ENCODE measurements at regions of chr3 and their contacts with region 1.

Region 1: DNA sequence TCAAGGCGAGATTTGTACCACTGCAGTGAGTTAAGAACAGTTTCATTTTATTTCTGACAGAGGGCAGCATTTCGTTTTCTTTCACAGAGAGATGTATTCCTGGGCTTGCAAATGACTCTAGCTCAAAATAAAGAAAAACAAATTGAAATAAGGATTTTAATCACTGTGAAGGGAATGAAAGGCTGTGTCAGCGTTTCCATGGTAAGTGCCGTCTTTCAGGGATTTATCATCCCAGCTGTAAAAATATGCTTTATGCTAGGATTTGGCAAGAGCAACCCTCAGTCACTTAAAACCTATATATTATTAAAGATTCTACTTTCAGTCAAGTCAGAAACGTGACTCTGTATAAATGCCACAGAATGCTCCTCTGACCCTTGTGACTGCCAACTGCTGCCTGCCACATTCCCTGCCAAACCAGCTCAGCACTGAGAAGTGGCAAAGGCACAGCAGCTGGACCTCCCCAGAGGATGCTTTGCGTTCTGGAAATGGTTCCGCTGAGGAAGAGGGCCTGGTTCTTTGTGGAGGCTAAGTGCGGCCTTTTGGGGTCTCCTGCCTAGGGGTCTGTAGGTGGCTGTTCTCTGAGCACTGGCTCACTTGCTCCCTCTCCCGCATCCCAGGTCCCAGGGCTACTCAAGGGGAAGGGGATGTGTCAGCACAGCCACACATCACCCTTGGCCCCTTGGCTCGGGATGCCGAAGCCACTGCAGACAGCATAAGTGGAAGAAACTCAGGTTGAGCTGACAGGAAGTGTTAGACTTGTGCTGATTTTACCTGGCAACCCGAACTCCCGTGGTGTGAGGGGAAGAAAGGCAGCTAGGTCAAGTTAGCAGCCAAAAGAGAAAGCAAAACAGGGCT is 56.6 kb upstream of the POMGNT2 start:
- DNase-seq: no peak
- H3K4me3 ChIP-seq: no peak overlapping the region
- H3K27ac ChIP-seq: no peak overlapping the region
- H3K4me1 ChIP-seq: no peaks in the 10 kb centered on the region
- H3K27me3 ChIP-seq: no peaks in the 10 kb centered on the region
- CTCF ChIP-seq: peak; percentile 52

Region 2: DNA sequence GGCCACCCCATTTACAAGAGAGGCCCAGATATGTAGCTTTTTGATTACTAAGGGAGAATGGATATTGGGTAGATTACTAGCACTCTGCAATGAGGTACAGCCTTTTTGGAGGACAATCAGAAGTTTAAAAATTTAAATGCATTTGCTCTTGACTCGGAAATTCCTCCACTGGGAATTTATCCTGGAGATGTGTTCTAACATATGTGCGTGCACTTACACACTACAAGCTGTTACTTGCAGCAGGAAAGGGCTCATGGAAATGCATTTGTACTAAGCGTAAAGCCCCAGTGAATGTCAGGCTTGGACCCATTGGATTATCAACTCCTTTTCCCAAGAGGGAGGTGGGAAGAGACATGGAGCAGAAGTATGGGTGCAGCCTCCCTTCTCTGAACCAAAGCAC is 48.8 kb before region 1 on chr3:
- CTCF ChIA-PET with region 1: interaction called, 10 read pairs
- POLR2A ChIA-PET with region 1: no interaction called
- intact Hi-C with region 1: no loop called
- DNase-seq: no peak
- H3K4me3 ChIP-seq: no peak overlapping the region
- H3K27ac ChIP-seq: no peak overlapping the region
- H3K4me1 ChIP-seq: no peaks in the 10 kb centered on the region
- H3K27me3 ChIP-seq: peaks cover 7% of the 10 kb centered on the region; the same call in 1 of the 2 replicates
- CTCF ChIP-seq: no peak

Region 3: GRCh38 chr3:43194490-43195114 is 32.1 kb after region 1 on chr3:
- CTCF ChIA-PET with region 1: no interaction called
- POLR2A ChIA-PET with region 1: no interaction called
- intact Hi-C with region 1: no loop called
- DNase-seq: no peak
- H3K4me3 ChIP-seq: no peak overlapping the region
- H3K27ac ChIP-seq: no peak overlapping the region
- H3K4me1 ChIP-seq: no peaks in the 10 kb centered on the region
- H3K27me3 ChIP-seq: no peaks in the 10 kb centered on the region
- CTCF ChIP-seq: no peak

Region 4: DNA sequence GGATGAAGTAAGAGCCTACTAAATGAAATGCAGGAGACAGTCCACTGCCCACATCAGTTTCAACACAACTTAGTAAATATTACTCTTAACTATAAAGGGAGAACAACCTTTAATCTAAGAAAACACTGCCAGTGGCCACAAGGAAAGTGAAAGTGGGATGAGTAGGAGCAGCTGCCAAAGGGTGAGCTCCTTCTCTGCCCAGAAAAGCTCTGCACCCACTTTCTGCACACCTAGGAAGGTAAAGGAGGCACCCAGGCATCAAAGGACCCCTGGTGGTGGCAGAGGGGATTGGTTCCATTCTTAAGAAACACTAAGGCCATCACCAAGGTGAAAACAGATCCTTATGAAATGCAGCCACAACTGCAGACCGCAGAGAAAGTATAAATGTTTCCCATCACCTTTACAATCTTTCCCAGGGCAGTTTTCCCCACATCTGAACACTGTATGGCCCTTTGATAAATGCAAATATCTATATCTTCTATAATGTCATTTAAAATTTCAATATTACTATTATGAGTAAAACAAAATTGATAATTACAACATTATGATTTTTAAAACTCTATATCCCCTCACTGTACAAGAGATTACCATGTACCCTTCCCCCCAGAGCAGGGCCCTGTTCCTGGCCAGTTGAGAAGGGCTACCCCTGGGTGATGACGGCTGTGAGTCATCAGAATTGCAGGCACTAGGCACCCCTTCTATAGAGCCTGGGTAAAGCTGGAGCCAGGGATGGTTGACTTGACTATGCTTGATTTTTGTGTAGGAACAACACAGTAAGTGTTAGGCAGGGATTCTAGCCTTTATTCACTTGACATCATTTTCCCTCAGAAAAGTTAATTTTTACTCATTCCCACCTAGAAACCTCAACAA is 215.8 kb after region 1 on chr3:
- CTCF ChIA-PET with region 1: no interaction called
- POLR2A ChIA-PET with region 1: no interaction called
- intact Hi-C with region 1: loop called (anchors 2 kb)
- DNase-seq: peak; percentile 27 to 39
- H3K4me3 ChIP-seq: no peak overlapping the region
- H3K27ac ChIP-seq: no peak overlapping the region
- H3K4me1 ChIP-seq: no peaks in the 10 kb centered on the region
- H3K27me3 ChIP-seq: no peaks in the 10 kb centered on the region
- CTCF ChIP-seq: peak; percentile 71

Region 5: DNA sequence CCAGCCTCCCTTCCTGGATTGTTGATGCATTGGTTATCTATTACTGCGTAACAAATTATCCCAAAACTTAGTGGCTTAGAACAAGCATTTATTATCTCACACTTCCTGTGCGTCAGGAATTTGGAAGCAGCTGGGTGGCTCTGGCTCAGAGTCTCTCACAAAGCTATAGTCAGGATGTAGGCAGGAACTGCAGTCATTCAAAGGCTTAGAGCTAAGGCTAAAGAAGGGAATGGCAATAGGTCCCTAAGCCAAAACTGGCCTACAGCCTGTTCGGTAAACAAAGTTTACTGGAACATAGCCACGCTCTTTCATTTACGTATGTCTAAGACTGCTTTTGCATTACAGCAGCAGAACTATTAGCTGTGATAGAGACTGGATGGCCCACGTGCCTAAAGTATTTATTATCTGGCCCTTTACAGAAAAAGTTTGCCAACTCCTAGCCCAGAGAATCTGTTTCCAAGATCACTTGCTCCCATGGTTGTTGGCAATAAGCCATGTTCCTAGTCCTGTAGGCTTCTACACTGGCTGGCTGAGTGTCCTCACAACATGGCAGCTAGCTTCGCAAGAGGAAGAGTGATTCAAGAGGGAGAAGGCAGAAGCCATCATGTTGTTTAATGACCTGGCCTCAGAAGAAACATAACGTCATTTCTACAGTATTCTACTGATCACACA is 256.3 kb after region 1 on chr3:
- CTCF ChIA-PET with region 1: no interaction called
- POLR2A ChIA-PET with region 1: no interaction called
- intact Hi-C with region 1: no loop called
- DNase-seq: no peak
- H3K4me3 ChIP-seq: no peak overlapping the region
- H3K27ac ChIP-seq: no peak overlapping the region
- H3K4me1 ChIP-seq: no peaks in the 10 kb centered on the region
- H3K27me3 ChIP-seq: no peaks in the 10 kb centered on the region
- CTCF ChIP-seq: no peak

Region 6: GRCh38 chr3:43855674-43856299 is 693.3 kb after region 1 on chr3:
- CTCF ChIA-PET with region 1: no interaction called
- POLR2A ChIA-PET with region 1: interaction called, 10 read pairs
- intact Hi-C with region 1: no loop called
- DNase-seq: peak; percentile 64 to 69
- H3K4me3 ChIP-seq: no peak overlapping the region
- H3K27ac ChIP-seq: no peak overlapping the region
- H3K4me1 ChIP-seq: peaks cover 28% of the 10 kb centered on the region
- H3K27me3 ChIP-seq: no peaks in the 10 kb centered on the region
- CTCF ChIP-seq: peak; percentile 69

Measured in PC-9 (cell line).